Activated CD4-positive, alpha-beta T cell treated with anti-CD3 and anti-CD28 coated beads, Interleukin-2, amount 10 ng/mL, durations not matched to agents 24 days and 14 days (primary cell): ENCODE measurements at regions of chr10 and their contacts with region 1.

Region 1: GRCh38 chr10:96374985-96375830 is 16.4 kb upstream of the OPALIN start:
- DNase-seq: peak; percentile 93
- H3K4me3 Mint-ChIP-seq: peak overlapping the region; percentile 83
- H3K27ac Mint-ChIP-seq: no peak overlapping the region
- H3K4me1 Mint-ChIP-seq: peaks cover 10% of the 10 kb centered on the region
- H3K27me3 Mint-ChIP-seq: peaks cover 8% of the 10 kb centered on the region

Region 2: GRCh38 chr10:96513698-96514561 is 138.7 kb after region 1 on chr10 and contains the start of gene TLL2:
- intact Hi-C with region 1: loop called (anchors 1 kb)
- DNase-seq: peak; percentile 89
- H3K4me3 Mint-ChIP-seq: peak within 1 kb of the TSS; percentile 76
- H3K27ac Mint-ChIP-seq: no peak within 1 kb of the TSS
- H3K4me1 Mint-ChIP-seq: peaks cover 13% of the 10 kb centered on the region
- H3K27me3 Mint-ChIP-seq: peaks cover 62% of the 10 kb centered on the region
- total RNA-seq, gene TLL2: not detected in 2 replicates